ENCODE measurements at regions of chr12 and their contacts with region 1.

Region 1: GRCh38 chr12:45215419-45216229 is at the start of gene ANO6:
- DNase-seq: peak; percentile 87
- H3K4me3 ChIP-seq: peak within 1 kb of the TSS; percentile 75 to 85
- H3K27ac ChIP-seq: peak within 1 kb of the TSS; percentile 86 to 94
- H3K4me1 ChIP-seq: no peaks in the 10 kb centered on the region
- H3K27me3 ChIP-seq: no peaks in the 10 kb centered on the region
- CTCF ChIP-seq: peak in 1 of 4 experiments; percentile 25
- POLR2A ChIP-seq: peak; percentile 80
- total RNA-seq, gene ANO6: 36.8 to 78.8 TPM

Region 2: DNA sequence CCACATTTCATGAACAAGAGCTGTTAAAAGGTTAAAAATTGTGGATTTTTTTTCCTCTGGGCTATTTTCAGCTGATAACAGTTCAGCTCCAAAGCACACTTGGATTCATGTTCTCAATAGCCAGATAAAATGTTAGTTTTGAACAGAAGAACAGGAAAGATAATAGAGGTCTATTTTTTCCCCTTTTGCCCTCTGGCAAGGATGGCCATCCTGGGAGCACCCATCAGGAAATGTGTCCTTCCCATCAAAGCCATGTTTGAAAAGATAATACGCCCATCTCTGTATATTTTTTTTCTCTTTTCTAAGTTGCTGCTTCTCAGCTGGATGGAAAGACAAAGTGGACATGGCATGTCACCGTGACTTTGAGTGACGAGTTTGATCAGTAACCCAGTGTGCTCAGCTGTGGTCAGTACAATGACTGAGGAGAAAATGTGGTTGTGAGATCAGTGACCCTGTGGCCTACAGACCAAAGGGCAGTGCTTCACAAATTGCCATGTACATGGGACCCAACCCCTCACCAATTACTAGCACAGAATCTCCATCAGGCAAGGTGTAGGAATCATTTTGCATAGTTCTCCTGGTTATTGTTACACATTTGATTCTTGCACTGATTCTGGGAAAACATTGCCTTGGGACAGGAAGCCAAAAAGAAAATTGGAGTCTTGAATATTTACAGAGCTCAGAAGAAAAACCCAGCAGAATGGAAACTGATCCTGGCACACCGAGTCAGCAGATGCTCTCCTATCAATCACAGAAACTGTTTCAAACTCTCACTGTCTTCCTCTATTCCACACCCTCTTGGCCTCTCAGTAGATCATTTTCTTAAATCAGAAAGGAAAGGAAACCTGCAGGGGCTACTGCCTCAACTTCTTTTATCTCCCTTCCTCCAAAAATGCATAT is 64.6 kb after region 1 on chr12:
- intact Hi-C with region 1: loop called (anchors 5 kb)
- DNase-seq: no peak
- H3K4me3 ChIP-seq: no peak overlapping the region
- H3K27ac ChIP-seq: no peak overlapping the region
- H3K4me1 ChIP-seq: no peaks in the 10 kb centered on the region
- H3K27me3 ChIP-seq: no peaks in the 10 kb centered on the region
- CTCF ChIP-seq: no peak
- POLR2A ChIP-seq: no peak

Region 3: DNA sequence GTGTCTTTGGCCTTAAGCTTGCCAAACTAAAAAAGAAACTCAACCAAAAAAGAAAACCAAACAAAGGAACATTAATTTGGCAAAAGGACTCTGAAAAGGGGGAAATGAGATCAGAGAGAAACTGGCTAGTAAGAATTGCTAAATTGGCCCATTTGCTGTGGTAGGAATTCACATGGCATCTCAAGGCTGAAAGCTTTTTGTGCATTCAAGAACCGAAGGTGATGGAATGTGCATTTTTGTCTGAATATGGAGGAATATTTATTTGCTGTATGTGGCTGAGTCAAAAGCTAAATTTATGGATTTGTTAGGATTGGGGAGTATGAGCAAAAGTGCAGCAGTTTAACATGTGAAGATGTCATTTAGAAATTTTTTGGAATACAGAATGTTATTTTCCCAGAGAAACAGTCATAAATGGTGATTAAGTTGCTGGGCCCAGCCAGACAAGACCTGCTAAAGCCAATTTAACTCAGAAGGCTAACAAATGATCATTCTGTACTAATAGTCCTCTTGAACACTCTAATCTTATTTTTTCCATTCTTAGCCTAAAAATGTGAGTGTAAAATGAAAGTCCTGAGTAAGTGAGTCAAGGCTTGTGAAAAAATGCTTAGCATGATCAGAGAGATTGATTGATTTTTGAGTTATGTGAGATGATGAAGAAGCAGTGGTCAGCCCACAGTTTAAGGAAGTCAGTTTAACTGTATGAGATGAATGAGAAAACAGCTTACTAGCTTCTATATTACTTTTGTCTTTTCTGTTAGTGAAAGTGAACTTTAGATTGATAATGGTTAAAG is 94.4 kb after region 1 on chr12:
- intact Hi-C with region 1: loop called (anchors 5 kb)
- DNase-seq: no peak
- H3K4me3 ChIP-seq: no peak overlapping the region
- H3K27ac ChIP-seq: no peak overlapping the region
- H3K4me1 ChIP-seq: no peaks in the 10 kb centered on the region
- H3K27me3 ChIP-seq: no peaks in the 10 kb centered on the region
- CTCF ChIP-seq: no peak
- POLR2A ChIP-seq: no peak

Region 4: DNA sequence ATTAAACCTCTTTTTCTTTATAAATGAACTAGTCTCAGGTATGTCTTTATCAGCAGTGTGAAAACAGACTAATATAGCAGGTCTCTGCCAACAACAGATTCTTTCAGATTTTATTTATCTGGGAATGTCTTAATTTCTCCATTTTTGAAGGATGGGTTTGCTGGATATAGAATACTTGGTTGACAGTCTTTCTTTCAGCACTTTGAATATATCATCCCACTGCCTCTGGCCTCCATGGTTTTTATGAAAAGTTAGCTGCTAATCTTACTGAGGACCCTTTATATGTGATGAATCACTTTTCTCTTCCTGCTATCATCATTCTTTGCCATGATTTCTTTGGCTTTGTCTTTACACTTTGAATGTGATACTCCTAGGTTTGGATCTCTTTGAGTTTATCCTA is 148.3 kb after region 1 on chr12:
- intact Hi-C with region 1: loop called (anchors 5 kb)
- DNase-seq: no peak
- H3K4me3 ChIP-seq: no peak overlapping the region
- H3K27ac ChIP-seq: no peak overlapping the region
- H3K4me1 ChIP-seq: no peaks in the 10 kb centered on the region
- H3K27me3 ChIP-seq: no peaks in the 10 kb centered on the region
- CTCF ChIP-seq: no peak
- POLR2A ChIP-seq: no peak

Region 5: GRCh38 chr12:45388545-45388944 is 172.9 kb after region 1 on chr12:
- intact Hi-C with region 1: loop called (anchors 5 kb)
- DNase-seq: peak; percentile 10
- H3K4me3 ChIP-seq: no peak overlapping the region
- H3K27ac ChIP-seq: no peak overlapping the region
- H3K4me1 ChIP-seq: no peaks in the 10 kb centered on the region
- H3K27me3 ChIP-seq: no peaks in the 10 kb centered on the region
- CTCF ChIP-seq: peak; percentile 18 to 62 (median 46)
- POLR2A ChIP-seq: no peak

Region 6: GRCh38 chr12:45990468-45991283 is 775.1 kb after region 1 on chr12 and contains the start of gene SCAF11:
- intact Hi-C with region 1: loop called (anchors 5 kb)
- DNase-seq: peak; percentile 100
- H3K4me3 ChIP-seq: peak within 1 kb of the TSS; percentile 73 to 79
- H3K27ac ChIP-seq: peak within 1 kb of the TSS; percentile 98 to 99
- H3K4me1 ChIP-seq: peaks cover 7% of the 10 kb centered on the region
- H3K27me3 ChIP-seq: no peaks in the 10 kb centered on the region
- CTCF ChIP-seq: peak; percentile 98 to 100 (median 100)
- POLR2A ChIP-seq: peak; percentile 55
- total RNA-seq, gene SCAF11: 144 to 171 TPM

Measured in prostate gland (tissue), 2 donors.